Activated CD4-positive, alpha-beta memory T cell treated with anti-CD3 and anti-CD28 coated beads for 36 hours (primary cell): ENCODE measurements at regions of chr9 and their contacts with region 1.

Region 1: GRCh38 chr9:3525836-3526164 is at the start of gene RFX3:
- DNase-seq: peak; percentile 95
- H3K4me3 Mint-ChIP-seq: peak within 1 kb of the TSS; percentile 99
- H3K27ac Mint-ChIP-seq: peak within 1 kb of the TSS; percentile 99
- H3K4me1 Mint-ChIP-seq: peaks cover 42% of the 10 kb centered on the region
- H3K27me3 Mint-ChIP-seq: no peaks in the 10 kb centered on the region
- total RNA-seq, gene RFX3: 12.2 to 13.4 TPM

Region 2: GRCh38 chr9:3240656-3241268 is 285.0 kb before region 1 on chr9:
- CTCF ChIA-PET with region 1: no interaction called
- POLR2A ChIA-PET with region 1: interaction called, 3 read pairs
- intact Hi-C with region 1: loop called (anchors 5 kb)
- DNase-seq: peak; percentile 78
- H3K4me3 Mint-ChIP-seq: no peak overlapping the region
- H3K27ac Mint-ChIP-seq: no peak overlapping the region
- H3K4me1 Mint-ChIP-seq: peaks cover 5% of the 10 kb centered on the region
- H3K27me3 Mint-ChIP-seq: no peaks in the 10 kb centered on the region

Region 3: GRCh38 chr9:3478549-3478953 is 47.2 kb before region 1 on chr9:
- CTCF ChIA-PET with region 1: interaction called, 4 read pairs
- POLR2A ChIA-PET with region 1: interaction called, 41 read pairs
- intact Hi-C with region 1: loop called (anchors 1 kb)
- DNase-seq: peak; percentile 25
- H3K4me3 Mint-ChIP-seq: no peak overlapping the region
- H3K27ac Mint-ChIP-seq: peak overlapping the region; percentile 66
- H3K4me1 Mint-ChIP-seq: peaks cover 71% of the 10 kb centered on the region
- H3K27me3 Mint-ChIP-seq: no peaks in the 10 kb centered on the region

Region 4: GRCh38 chr9:3514786-3515185 is 11.0 kb before region 1 on chr9:
- CTCF ChIA-PET with region 1: no interaction called
- POLR2A ChIA-PET with region 1: no interaction called
- intact Hi-C with region 1: loop called (anchors 1 kb)
- DNase-seq: no peak
- H3K4me3 Mint-ChIP-seq: no peak overlapping the region
- H3K27ac Mint-ChIP-seq: no peak overlapping the region
- H3K4me1 Mint-ChIP-seq: peaks cover 29% of the 10 kb centered on the region
- H3K27me3 Mint-ChIP-seq: no peaks in the 10 kb centered on the region

Region 5: GRCh38 chr9:3746296-3747275 is 220.8 kb after region 1 on chr9:
- CTCF ChIA-PET with region 1: no interaction called
- POLR2A ChIA-PET with region 1: no interaction called
- intact Hi-C with region 1: loop called (anchors 5 kb)
- DNase-seq: peak; percentile 68
- H3K4me3 Mint-ChIP-seq: no peak overlapping the region
- H3K27ac Mint-ChIP-seq: peak overlapping the region; percentile 57
- H3K4me1 Mint-ChIP-seq: peaks cover 23% of the 10 kb centered on the region
- H3K27me3 Mint-ChIP-seq: peaks cover 3% of the 10 kb centered on the region

Region 6: DNA sequence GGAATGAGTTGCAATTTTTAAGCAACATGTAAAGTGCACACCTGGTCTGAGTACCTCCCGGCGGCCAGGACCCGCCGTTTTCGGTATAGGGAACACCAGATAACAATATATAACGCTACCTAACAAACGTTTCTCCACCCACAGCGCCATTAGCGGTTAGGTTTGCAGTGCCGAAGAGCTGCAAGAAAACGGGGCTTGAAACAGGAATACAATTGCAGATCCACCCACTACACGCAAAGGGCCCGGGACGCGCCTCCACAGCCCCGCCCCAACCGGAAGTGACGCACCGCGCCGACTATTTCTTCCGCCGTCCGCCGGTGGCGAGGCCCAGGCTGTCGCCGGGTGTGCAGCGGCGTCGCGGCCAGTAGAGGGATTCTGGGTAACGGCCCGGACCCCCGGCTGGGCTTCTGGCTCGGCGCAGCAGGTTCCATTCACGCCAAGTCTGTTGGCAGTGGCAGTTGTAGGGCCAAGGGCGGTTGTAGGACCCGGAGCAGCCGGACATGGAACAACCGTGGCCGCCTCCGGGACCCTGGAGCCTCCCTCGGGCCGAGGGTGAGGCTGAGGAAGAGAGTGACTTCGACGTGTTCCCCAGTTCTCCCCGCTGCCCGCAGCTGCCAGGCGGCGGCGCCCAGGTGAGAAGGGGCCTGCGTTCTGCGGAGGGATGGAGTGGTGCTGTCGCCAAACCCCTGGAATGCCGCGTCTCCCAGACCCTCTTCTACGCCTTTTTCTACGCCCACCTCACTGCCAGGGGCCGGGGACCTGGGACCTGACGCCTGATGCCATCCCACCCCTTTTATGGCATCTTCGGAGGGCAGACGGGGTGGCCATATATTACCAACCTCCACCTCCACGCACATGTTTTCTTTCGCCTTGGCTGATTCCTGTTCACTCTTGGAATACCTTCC is 1153.7 kb after region 1 on chr9 and contains the start of gene CDC37L1:
- CTCF ChIA-PET with region 1: no interaction called
- POLR2A ChIA-PET with region 1: no interaction called
- intact Hi-C with region 1: loop called (anchors 2 kb)
- DNase-seq: peak; percentile 99
- H3K4me3 Mint-ChIP-seq: no peak within 1 kb of the TSS
- H3K27ac Mint-ChIP-seq: no peak within 1 kb of the TSS
- H3K4me1 Mint-ChIP-seq: peaks cover 10% of the 10 kb centered on the region
- H3K27me3 Mint-ChIP-seq: no peaks in the 10 kb centered on the region
- total RNA-seq, gene CDC37L1: 9.7 to 11.0 TPM